AG04450 (cell line): ENCODE measurements at regions of chr18 and their contacts with region 1.

Region 1: DNA sequence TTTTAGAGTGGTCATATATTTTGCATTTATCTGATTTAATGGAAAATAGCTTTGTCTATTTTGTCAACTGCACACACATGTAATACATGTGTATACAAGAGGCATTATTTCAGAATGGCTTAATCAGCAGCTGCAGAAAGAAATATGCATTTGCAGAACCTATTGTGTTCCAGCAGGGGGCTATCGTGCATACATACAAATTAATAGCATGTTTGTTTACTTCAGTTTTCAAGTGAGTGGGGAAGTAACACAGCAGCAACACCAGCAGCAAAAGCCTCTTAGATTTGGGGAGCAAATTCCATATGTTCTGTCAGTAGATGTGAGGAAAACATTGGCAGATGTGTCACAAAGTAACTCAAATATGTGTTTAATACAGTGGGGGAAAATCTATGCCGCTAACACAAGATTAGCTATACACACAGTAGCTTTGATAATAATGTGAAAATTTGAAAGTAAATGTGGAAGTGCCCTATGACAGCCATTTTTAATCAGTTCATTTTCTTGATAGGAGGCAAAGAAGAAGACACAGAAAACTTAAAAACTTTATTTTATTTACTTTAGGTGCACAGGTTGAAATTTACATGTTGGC is 218.1 kb downstream of the WDR7 start:
- DNase-seq: peak; percentile 41
- H3K4me3 ChIP-seq: no peak overlapping the region
- H3K27ac ChIP-seq: no peak overlapping the region
- H3K27me3 ChIP-seq: no peaks in the 10 kb centered on the region
- CTCF ChIP-seq: peak; percentile 81

Region 2: DNA sequence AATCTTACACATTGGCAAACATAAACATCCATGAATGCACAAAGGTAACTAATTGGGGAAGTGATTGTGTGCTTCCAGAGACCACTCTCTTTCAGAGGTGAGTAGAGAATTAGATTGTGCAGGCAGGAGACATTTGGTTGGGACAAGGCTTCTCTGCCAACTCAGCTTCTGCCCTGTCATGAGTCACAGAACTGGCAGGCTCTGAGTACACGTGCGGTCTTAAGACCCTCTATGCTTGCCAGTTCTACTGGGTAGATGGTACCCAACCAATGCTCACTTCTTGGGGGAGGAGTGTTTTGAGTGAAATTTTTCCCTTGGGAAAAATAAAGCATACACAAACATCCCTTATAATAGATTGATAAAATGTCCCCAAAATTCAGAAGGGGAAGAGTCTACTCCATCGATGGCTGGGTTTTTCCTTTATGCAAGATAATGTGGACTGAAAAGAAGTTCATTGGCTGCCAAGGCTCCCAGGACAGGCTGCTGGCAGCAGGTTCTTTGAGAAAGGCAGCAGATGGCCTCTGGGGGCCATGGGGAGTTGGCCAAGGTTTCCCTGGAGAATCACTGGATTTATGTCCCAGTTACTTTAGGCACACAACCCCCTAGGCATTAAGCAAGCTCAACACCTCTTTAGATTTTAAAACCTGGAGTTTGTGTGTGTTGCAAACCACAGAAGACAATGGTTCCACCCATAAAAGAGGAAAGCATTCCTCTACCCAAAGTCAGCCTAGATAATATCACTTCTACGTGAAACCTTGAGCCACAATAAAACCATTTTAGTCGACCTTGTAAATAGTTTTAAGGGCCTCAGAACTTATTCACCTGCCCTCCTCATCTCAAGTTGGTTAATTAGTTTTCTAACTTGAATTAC is 647.9 kb before region 1 on chr18:
- CTCF ChIA-PET with region 1: no interaction called
- POLR2A ChIA-PET with region 1: no interaction called
- DNase-seq: no peak
- H3K4me3 ChIP-seq: no peak overlapping the region
- H3K27ac ChIP-seq: no peak overlapping the region
- H3K27me3 ChIP-seq: no peaks in the 10 kb centered on the region
- CTCF ChIP-seq: no peak

Region 3: GRCh38 chr18:56890632-56891031 is 21.3 kb after region 1 on chr18:
- CTCF ChIA-PET with region 1: interaction called, 10 read pairs
- POLR2A ChIA-PET with region 1: no interaction called
- DNase-seq: peak; percentile 73
- H3K4me3 ChIP-seq: no peak overlapping the region; the same call in 1 of the 2 replicates
- H3K27ac ChIP-seq: peak overlapping the region; percentile 73
- H3K27me3 ChIP-seq: no peaks in the 10 kb centered on the region
- CTCF ChIP-seq: no peak

Region 4: DNA sequence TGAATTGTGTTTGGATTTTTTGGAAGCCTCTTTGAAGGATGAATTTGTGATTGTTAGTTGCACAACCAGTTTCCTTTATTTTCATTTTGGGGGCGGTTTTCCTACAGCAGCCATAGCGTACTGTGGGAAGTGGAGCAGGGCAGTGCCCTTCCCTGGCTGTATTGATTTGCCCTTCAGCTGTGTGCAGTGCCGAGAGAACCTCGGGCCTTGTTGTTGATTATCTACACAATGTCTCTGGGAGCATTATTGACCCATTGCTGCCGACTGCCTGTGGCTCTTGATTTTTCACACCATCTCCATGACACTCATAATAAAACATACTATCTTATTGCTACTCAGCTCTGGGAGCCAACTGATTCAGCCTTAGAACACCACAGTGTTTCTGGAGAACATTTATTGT is 115.4 kb after region 1 on chr18:
- CTCF ChIA-PET with region 1: interaction called, 12 read pairs
- POLR2A ChIA-PET with region 1: no interaction called
- DNase-seq: no peak
- H3K4me3 ChIP-seq: no peak overlapping the region
- H3K27ac ChIP-seq: no peak overlapping the region
- H3K27me3 ChIP-seq: no peaks in the 10 kb centered on the region
- CTCF ChIP-seq: no peak

Region 5: DNA sequence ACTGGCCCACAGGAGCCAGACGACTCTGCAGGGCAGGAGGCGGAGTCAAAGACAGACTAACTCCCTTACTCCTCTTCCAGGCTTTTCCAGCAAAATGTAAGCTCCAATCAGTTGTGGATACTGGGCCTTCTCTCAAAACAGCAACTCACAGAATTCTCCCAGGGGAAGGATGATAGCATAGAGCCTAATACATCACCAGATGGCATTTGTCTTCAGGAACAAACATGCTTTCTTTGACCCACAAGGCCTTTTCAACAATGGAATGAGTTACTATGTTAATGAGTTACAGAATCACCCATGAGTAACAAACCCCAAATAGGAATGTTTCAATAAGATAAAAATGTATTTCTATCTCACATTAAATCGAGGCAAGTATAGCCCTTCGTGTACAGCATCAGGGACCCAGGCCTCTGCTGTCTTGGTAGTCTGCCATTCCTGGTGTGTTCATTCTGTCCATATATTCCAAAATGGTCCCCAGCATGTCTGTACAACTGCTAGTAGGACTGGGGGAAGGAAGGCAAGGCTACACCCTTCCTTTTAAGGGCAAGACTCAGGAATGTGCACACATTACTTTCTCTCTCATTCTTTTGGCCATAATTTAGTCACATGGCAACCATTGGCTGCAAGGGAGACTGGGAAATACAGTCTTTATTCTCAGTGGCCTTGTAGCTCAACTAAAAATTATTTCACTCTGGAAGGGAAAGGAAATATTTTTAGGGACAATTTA is 354.0 kb after region 1 on chr18:
- CTCF ChIA-PET with region 1: no interaction called
- POLR2A ChIA-PET with region 1: no interaction called
- DNase-seq: no peak
- H3K4me3 ChIP-seq: no peak overlapping the region
- H3K27ac ChIP-seq: no peak overlapping the region
- H3K27me3 ChIP-seq: peaks cover 4% of the 10 kb centered on the region
- CTCF ChIP-seq: no peak